ENCODE measurements at regions of chr17 and their contacts with region 1.

Region 1: GRCh38 chr17:57243171-57243948 is 13.0 kb upstream of the MSI2 start:
- DNase-seq: peak; percentile 93
- H3K4me3 Mint-ChIP-seq: no peak overlapping the region
- H3K27ac Mint-ChIP-seq: peak overlapping the region; percentile 64
- H3K4me1 Mint-ChIP-seq: peaks cover 7% of the 10 kb centered on the region
- H3K27me3 Mint-ChIP-seq: peaks cover 23% of the 10 kb centered on the region

Region 2: GRCh38 chr17:57518587-57519581 is 275.5 kb after region 1 on chr17:
- intact Hi-C with region 1: loop called (anchors 10 kb)
- DNase-seq: no peak
- H3K4me3 Mint-ChIP-seq: no peak overlapping the region
- H3K27ac Mint-ChIP-seq: peak overlapping the region; percentile 54
- H3K4me1 Mint-ChIP-seq: peaks cover 18% of the 10 kb centered on the region
- H3K27me3 Mint-ChIP-seq: no peaks in the 10 kb centered on the region

Region 3: DNA sequence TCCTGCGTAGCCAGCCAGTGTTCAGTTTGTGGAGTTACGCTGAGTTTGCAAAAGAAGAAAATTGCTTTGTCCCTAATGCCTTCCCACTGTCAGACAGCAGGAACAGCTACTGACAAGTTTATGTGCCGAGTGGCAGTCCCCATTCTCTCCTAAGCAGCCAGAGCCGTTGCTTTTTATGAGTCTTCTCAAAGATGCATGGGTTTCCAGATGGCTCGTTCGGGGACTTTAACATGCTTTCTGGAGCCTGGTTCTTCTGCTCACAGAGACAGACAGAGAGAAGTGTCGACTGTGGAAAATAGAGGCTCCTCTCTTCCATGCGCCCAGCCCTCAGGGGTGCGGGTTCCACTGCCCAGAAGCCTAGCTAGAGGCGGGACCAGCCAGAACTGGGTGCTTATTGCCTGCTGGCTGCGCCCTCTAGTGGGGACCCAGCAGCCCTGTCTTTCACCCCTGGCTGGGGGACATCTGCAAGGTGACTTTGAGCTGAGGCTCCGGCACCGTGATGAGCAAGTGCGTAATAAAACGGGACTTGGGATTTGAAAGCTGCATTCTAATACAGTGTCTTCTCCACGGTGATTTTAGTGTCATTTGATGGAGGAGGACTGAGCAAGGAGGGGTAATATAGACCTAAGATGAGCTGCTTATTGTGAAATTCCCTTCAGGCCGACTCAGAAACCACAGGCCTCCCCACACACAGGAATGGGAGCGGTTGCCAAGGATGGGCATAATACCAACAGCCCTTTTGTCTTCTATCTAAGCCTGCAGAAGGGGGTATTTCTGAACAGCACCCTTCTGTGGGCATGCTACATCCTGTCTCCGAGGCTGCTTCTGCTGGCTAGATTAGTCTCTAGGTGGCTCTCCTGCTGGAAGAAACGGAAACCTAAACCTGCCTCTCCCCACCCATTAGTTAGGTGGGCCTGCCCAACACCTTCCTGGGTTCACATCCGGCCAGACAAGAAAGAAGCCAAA is 428.6 kb after region 1 on chr17:
- intact Hi-C with region 1: loop called (anchors 1 kb)
- DNase-seq: peak; percentile 89
- H3K4me3 Mint-ChIP-seq: no peak overlapping the region
- H3K27ac Mint-ChIP-seq: no peak overlapping the region
- H3K4me1 Mint-ChIP-seq: peaks cover 18% of the 10 kb centered on the region
- H3K27me3 Mint-ChIP-seq: no peaks in the 10 kb centered on the region

Region 4: DNA sequence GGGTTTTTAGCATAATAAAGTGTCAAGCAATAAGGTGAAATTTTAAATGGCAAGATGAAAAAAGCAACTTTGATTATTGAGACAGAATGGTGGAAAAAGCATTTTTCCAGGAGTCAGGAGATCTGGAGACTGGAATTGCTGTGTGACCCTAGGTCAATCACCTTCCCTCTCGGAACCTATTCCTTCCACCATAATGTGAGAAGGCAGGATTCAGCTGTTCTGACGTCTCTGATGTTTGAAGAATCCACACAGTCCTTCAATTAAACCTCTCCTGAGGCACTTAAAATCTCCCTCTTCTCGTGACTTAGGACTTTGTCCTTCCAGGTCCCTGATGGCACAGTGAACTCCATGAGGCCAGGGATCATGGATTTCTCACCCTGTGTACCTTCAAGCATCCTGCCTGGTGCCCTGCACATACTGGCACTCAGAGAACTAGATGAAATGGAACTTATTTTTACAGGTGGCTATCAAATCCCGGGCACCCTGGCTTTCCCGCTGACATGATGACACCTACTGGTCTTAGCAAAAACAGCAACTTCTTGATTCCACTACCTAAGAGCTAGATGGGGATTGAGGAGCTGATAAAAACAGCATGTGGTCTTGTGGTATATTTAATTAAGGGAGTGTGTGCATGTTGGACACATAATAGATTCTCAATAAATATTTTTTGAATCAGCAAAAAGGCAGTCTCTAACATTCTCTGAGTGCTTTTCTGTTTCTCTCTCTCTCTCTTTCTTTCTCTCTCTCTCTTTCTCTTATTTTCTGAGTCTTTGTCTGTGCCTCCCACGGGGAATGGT is 504.1 kb after region 1 on chr17:
- intact Hi-C with region 1: loop called (anchors 2 kb)
- DNase-seq: peak; percentile 80
- H3K4me3 Mint-ChIP-seq: no peak overlapping the region
- H3K27ac Mint-ChIP-seq: no peak overlapping the region
- H3K4me1 Mint-ChIP-seq: peaks cover 4% of the 10 kb centered on the region
- H3K27me3 Mint-ChIP-seq: peaks cover 21% of the 10 kb centered on the region

Measured in activated CD4-positive, alpha-beta T cell treated with anti-CD3 and anti-CD28 coated beads, Interleukin-2, amount 10 ng/mL, durations not matched to agents 24 days and 14 days (primary cell).